ENCODE measurements at regions of chr10 and their contacts with region 1.

Region 1: DNA sequence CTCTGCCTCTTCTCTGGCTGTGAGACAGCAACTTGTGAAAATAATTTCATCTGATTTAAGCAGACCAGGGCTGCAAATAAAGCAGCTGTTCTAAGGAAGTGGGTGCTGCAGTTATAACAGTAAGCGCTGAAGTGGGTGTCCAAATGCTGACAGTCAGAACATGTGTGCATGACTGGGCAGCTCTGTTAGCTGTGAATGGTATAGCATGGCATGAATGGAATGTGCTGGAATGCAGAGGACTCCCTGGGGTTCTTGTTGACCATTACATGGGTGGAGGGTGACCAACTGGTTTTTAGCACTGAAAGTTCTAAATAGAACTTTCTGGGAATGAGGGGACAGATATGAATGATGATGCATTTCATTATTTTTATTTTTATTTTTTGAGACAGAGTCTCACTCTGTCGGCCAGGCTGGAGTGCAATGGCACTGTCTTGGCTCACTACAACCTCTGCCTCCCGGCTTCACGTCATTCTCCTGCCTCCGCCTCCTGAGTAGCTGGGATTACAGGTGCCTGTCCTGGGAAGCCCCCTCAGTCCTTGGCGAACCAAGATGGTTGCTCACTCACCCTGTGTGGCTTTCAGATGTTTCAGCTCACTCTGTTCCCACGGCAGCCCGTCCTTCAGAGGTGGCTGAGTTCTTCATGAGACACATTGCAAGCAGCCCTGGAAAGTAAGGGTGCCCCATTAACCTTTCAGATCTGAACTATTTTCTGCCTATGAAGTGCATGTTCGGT is 319.8 kb upstream of the PHYHIPL start:
- DNase-seq: peak; percentile 77 to 95
- H3K4me3 ChIP-seq: no peak overlapping the region
- H3K27ac ChIP-seq: peak overlapping the region; percentile 51
- H3K4me1 ChIP-seq: peaks cover 14% of the 10 kb centered on the region
- H3K27me3 ChIP-seq: no peaks in the 10 kb centered on the region
- CTCF ChIP-seq: no peak

Region 2: DNA sequence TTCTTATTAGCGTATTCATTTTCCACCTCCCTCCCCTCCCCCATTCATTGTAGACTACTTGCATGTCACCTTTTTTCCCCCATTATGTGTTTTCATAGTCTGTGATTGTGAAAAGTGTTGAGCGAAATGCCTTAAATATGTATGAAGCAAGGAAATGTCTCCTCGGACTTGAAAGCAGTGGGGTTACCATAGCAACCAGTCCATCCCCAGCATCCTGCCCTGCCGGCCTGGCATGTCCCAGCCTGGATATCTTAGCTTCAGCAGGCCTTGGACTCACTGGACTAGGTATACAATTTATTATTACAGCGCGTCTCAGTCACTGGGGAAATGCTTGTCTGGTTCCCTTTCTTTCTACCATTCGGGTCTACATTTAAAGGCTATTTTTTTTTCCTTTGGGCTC is 60.4 kb before region 1 on chr10:
- CTCF ChIA-PET with region 1: no interaction called
- POLR2A ChIA-PET with region 1: no interaction called
- intact Hi-C with region 1: loop called (anchors 10 kb)
- DNase-seq: no peak
- H3K4me3 ChIP-seq: no peak overlapping the region
- H3K27ac ChIP-seq: no peak overlapping the region
- H3K4me1 ChIP-seq: no peaks in the 10 kb centered on the region
- H3K27me3 ChIP-seq: no peaks in the 10 kb centered on the region
- CTCF ChIP-seq: no peak

Region 3: DNA sequence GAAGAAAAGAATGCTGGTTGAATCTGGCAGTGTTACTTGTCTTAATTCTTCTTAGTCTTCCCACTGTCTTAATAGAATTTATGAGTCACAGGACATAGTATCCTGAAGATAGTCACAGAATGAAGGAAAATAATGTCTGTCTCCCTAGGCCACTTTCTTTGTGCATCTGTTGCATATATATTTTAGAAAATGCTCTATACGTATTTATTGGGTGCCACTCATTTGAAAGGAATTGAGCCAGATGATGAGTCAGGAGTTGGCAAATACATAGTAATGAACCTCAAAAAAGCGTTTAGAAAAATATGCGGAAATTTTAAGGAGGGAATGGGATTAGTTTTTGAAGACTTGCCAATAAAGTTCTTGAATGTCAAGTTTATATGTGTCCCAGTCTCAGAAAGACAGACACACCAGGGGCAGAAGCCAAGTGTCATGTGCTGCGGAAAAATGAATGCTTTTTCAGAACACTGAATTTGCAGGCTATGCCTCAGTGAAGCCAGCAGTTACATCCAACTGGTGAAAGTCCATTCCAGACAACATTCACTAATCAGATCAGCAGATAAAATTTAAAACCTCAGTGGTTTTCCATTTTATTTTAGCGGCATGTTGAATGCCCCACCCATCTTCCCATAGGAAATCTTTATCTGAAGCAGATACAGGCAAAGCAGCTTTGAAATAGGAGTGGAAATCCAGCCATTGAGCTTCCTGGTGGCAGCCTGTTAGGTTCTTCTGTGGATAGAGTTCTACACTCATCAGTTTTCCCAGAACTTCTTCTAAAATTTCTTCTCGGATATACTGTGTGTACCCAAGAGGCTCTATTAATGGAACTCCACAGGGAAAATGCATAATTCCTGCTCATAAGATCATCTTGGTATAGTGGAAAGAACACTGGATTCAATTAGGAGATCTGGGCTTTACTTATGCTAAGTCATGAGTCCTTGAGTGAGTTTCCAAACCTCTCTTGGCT is 35.5 kb before region 1 on chr10:
- CTCF ChIA-PET with region 1: no interaction called
- POLR2A ChIA-PET with region 1: no interaction called
- intact Hi-C with region 1: loop called (anchors 1 kb)
- DNase-seq: peak; percentile 34 to 92
- H3K4me3 ChIP-seq: no peak overlapping the region
- H3K27ac ChIP-seq: peak overlapping the region; percentile 40
- H3K4me1 ChIP-seq: peaks cover 22% of the 10 kb centered on the region
- H3K27me3 ChIP-seq: no peaks in the 10 kb centered on the region
- CTCF ChIP-seq: no peak

Region 4: GRCh38 chr10:58919927-58920654 is 63.4 kb after region 1 on chr10:
- CTCF ChIA-PET with region 1: no interaction called
- POLR2A ChIA-PET with region 1: no interaction called
- intact Hi-C with region 1: no loop called
- DNase-seq: peak in 1 of 2 experiments; percentile 74
- H3K4me3 ChIP-seq: no peak overlapping the region
- H3K27ac ChIP-seq: peak overlapping the region; percentile 17; the same call in 1 of the 2 replicates
- H3K4me1 ChIP-seq: 0 out of 2 replicates have a peak, but pooled peaks cover 15% of the 10 kb centered on the region
- H3K27me3 ChIP-seq: no peaks in the 10 kb centered on the region
- CTCF ChIP-seq: no peak